H1 (cell line): ENCODE measurements at regions of chr6 and their contacts with region 1.

Region 1: GRCh38 chr6:33367009-33367714 is 24.5 kb upstream of the KIFC1 start:
- DNase-seq: no peak
- H3K4me3 ChIP-seq: no peak overlapping the region
- H3K27ac ChIP-seq: no peak overlapping the region
- H3K4me1 ChIP-seq: peaks cover 0 to 3% (median 0%) of the 10 kb centered on the region in 4 experiments; a peak in 2 of 7 replicates
- H3K27me3 ChIP-seq: no peaks in the 10 kb centered on the region
- CTCF ChIP-seq: no peak
- EP300 ChIP-seq: no peak
- POLR2A ChIP-seq: no peak
- RAD21 ChIP-seq: no peak

Region 2: DNA sequence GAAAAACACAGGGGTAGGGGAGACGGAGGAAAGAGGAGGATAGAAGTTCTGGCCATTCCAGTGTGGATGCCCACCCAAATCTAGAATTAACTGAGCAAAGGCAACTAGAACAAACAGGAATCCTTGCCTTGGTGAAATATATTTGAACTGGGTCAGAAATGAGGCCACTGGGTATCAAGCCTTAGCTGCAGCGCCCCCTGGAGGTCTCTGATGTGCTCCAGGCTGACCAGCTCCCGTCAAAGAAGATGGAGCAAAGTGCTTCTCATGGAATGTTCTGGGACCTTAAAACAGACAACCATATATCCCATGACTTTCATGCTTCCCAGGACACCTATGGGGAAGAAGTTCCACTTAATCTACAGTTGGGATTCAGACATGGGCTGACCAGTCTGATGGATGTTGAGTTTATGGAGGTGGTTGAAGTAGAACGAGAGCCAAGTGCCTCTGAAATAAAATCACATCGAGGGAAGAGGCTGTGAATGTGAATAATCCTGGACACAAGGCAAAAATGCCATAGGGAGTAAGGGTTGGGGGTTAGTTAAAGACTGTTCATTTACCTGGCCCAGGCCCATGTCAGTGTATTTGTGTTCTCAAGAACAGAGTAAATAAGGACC is 241.0 kb before region 1 on chr6:
- CTCF ChIA-PET with region 1: no interaction called
- POLR2A ChIA-PET with region 1: no interaction called
- DNase-seq: peak in 1 of 2 experiments; percentile 91
- H3K4me3 ChIP-seq: no peak overlapping the region
- H3K27ac ChIP-seq: no peak overlapping the region
- H3K4me1 ChIP-seq: peaks cover 0 to under 1% (median 0%) of the 10 kb centered on the region in 4 experiments; a peak in 2 of 7 replicates
- H3K27me3 ChIP-seq: no peaks in the 10 kb centered on the region
- CTCF ChIP-seq: peak; percentile 72 to 85 (median 80)
- EP300 ChIP-seq: no peak
- POLR2A ChIP-seq: no peak
- RAD21 ChIP-seq: peak; percentile 45 to 56; a peak in 3 of 4 replicates

Region 3: GRCh38 chr6:33384581-33385020 is 17.4 kb after region 1 on chr6:
- CTCF ChIA-PET with region 1: interaction called, 11 read pairs
- POLR2A ChIA-PET with region 1: no interaction called
- DNase-seq: no peak
- H3K4me3 ChIP-seq: no peak overlapping the region
- H3K27ac ChIP-seq: no peak overlapping the region
- H3K4me1 ChIP-seq: no peaks in the 10 kb centered on the region
- H3K27me3 ChIP-seq: no peaks in the 10 kb centered on the region
- CTCF ChIP-seq: peak; percentile 4 to 50 (median 47)
- EP300 ChIP-seq: no peak
- POLR2A ChIP-seq: no peak
- RAD21 ChIP-seq: peak; percentile 34 to 46; a peak in 3 of 4 replicates